Activated CD4-positive, alpha-beta T cell treated with anti-CD3 and anti-CD28 coated beads for 36 hours (primary cell): ENCODE measurements at regions of chr10 and their contacts with region 1.

Region 1: DNA sequence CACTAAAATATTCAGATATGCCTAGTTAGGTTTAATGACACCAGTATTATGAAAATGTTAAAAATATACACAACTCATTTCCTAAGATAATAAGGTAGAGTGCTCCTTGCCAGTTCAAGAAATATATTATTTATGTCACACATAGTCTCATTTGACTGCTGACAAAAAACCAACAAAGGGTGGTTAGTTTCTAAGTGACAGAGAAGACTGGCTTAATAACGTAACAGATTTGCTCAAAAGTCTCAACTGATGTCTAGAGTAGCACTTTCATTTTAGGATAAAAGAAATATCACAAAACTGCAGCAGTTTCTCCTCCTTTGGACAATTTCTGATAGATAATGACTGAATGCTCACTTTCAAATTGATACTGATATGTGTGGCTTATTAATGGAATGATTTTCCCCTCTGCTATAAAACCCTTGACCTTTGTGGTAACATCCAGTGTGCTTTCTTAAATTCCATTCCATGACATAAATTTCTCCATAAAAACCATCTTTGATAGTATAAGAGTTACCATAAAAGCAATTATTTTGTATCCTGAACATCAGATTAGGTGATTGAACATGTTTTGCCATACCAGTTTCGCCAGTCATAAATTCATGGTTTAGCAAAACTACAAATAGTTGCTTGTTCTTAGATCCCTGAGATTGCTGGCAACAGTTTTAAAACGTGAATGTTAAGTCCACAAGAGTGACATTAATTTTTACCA is 94.2 kb downstream of the NRBF2 start:
- DNase-seq: no peak
- ATAC-seq: peak; percentile 45
- H3K4me3 Mint-ChIP-seq: peak overlapping the region; percentile 52
- H3K27ac Mint-ChIP-seq: peak overlapping the region; percentile 88
- H3K4me1 Mint-ChIP-seq: peaks cover 53% of the 10 kb centered on the region
- H3K27me3 Mint-ChIP-seq: no peaks in the 10 kb centered on the region

Region 2: DNA sequence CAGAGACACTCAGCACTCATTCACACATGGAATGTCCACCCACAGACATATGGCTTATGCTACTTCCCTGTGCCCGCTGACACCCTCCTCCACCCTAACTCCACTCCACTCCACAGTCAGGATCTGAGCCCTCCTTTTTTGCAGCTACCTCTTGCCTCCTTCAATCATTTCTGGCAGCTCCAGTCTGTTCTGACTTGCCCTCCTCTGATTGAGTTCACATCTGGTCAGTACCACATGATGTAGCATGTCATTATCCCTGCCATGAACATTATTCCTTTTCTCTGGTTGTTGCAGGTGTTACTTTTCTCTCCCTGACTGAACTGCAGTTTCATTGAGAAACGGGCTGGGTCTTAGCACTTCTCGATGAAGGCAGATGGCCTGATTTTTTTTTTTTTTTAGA is 281.1 kb before region 1 on chr10:
- CTCF ChIA-PET with region 1: no interaction called
- POLR2A ChIA-PET with region 1: no interaction called
- intact Hi-C with region 1: no loop called
- DNase-seq: no peak
- ATAC-seq: no peak
- H3K4me3 Mint-ChIP-seq: no peak overlapping the region
- H3K27ac Mint-ChIP-seq: no peak overlapping the region
- H3K4me1 Mint-ChIP-seq: no peaks in the 10 kb centered on the region
- H3K27me3 Mint-ChIP-seq: peaks cover 12% of the 10 kb centered on the region

Region 3: GRCh38 chr10:63206997-63207811 is 20.2 kb before region 1 on chr10:
- CTCF ChIA-PET with region 1: interaction called, 6 read pairs
- POLR2A ChIA-PET with region 1: no interaction called
- intact Hi-C with region 1: loop called in 1 of 2 experiments (anchors 2 kb)
- DNase-seq: no peak
- ATAC-seq: peak; percentile 44
- H3K4me3 Mint-ChIP-seq: no peak overlapping the region
- H3K27ac Mint-ChIP-seq: peak overlapping the region; percentile 49
- H3K4me1 Mint-ChIP-seq: peaks cover 58% of the 10 kb centered on the region
- H3K27me3 Mint-ChIP-seq: no peaks in the 10 kb centered on the region

Region 4: GRCh38 chr10:63286754-63287264 is 59.4 kb after region 1 on chr10:
- CTCF ChIA-PET with region 1: no interaction called
- POLR2A ChIA-PET with region 1: no interaction called
- intact Hi-C with region 1: no loop called
- DNase-seq: no peak
- ATAC-seq: no peak
- H3K4me3 Mint-ChIP-seq: no peak overlapping the region
- H3K27ac Mint-ChIP-seq: no peak overlapping the region
- H3K4me1 Mint-ChIP-seq: peaks cover 2% of the 10 kb centered on the region
- H3K27me3 Mint-ChIP-seq: no peaks in the 10 kb centered on the region

Region 5: GRCh38 chr10:63355682-63356081 is 128.3 kb after region 1 on chr10:
- CTCF ChIA-PET with region 1: no interaction called
- POLR2A ChIA-PET with region 1: interaction called, 3 read pairs
- intact Hi-C with region 1: loop called in 1 of 2 experiments (anchors 1 kb)
- DNase-seq: no peak
- ATAC-seq: no peak
- H3K4me3 Mint-ChIP-seq: no peak overlapping the region
- H3K27ac Mint-ChIP-seq: peak overlapping the region; percentile 40
- H3K4me1 Mint-ChIP-seq: peaks cover 34% of the 10 kb centered on the region
- H3K27me3 Mint-ChIP-seq: no peaks in the 10 kb centered on the region

Region 6: GRCh38 chr10:63521416-63522276 is 294.3 kb after region 1 on chr10:
- CTCF ChIA-PET with region 1: no interaction called
- POLR2A ChIA-PET with region 1: interaction called, 3 read pairs
- intact Hi-C with region 1: loop called in 1 of 2 experiments (anchors 5 kb)
- DNase-seq: peak; percentile 75
- ATAC-seq: peak; percentile 72
- H3K4me3 Mint-ChIP-seq: peak overlapping the region; percentile 86
- H3K27ac Mint-ChIP-seq: peak overlapping the region; percentile 94
- H3K4me1 Mint-ChIP-seq: peaks cover 57% of the 10 kb centered on the region
- H3K27me3 Mint-ChIP-seq: no peaks in the 10 kb centered on the region

Region 7: GRCh38 chr10:63573068-63573697 is 345.8 kb after region 1 on chr10:
- CTCF ChIA-PET with region 1: no interaction called
- POLR2A ChIA-PET with region 1: no interaction called
- intact Hi-C with region 1: no loop called
- DNase-seq: no peak
- ATAC-seq: peak; percentile 88
- H3K4me3 Mint-ChIP-seq: no peak overlapping the region
- H3K27ac Mint-ChIP-seq: peak overlapping the region; percentile 55
- H3K4me1 Mint-ChIP-seq: peaks cover 13% of the 10 kb centered on the region
- H3K27me3 Mint-ChIP-seq: no peaks in the 10 kb centered on the region